ENCODE measurements at regions of chr5 and their contacts with region 1.

Region 1: DNA sequence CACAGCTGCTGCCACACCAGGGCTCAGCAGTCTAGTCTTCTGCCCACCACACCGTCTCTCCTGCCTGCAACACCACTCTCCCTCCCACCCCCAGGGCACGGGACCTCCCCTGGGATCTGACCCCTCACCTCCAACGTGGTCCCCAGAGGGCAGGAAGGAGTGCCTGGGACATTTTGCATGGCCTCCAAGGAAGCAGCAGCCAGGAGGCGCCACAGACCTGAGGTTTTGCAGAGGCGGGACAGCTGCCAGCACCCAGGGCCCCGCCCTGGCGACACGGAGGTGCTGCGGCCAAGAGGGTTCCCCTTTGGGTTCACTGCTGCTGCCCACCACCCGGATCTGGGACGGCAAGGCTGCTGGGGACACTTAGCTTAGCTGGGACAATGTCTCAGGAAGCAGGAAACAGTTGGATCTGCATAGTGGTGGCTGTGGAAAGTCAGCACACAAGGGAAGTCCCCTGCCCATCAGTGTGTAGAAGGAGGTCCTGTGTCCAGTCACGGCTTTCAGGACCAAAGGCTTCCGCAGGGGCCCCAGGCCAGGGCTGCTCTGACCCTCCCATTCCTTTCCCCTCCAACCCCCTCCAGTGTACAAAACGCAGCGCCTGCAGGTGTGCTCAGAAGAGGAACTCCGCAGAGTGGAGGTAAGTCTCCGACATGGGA is 13.8 kb downstream of the PROP1 start:
- DNase-seq: peak in 1 of 2 donors; percentile 16
- ATAC-seq: no peak
- H3K4me3 ChIP-seq: no peak overlapping the region
- H3K27ac ChIP-seq: no peak overlapping the region
- H3K4me1 ChIP-seq: no peaks in the 10 kb centered on the region
- H3K27me3 ChIP-seq: peaks cover 47 to 61% (median 53%) of the 10 kb centered on the region in 3 donors
- CTCF ChIP-seq: peak in 3 of 5 experiments; percentile 34 to 57 (median 40)
- POLR2A ChIP-seq: no peak

Region 2: GRCh38 chr5:177578331-177578730 is 403.9 kb before region 1 on chr5:
- in situ Hi-C with region 1: no loop called
- intact Hi-C with region 1: no loop called
- DNase-seq: no peak
- ATAC-seq: no peak
- H3K4me3 ChIP-seq: no peak overlapping the region
- H3K27ac ChIP-seq: no peak overlapping the region
- H3K4me1 ChIP-seq: no peaks in the 10 kb centered on the region
- H3K27me3 ChIP-seq: no peaks in the 10 kb centered on the region
- CTCF ChIP-seq: no peak
- POLR2A ChIP-seq: no peak

Region 3: GRCh38 chr5:178058321-178059012 is 76.3 kb after region 1 on chr5:
- in situ Hi-C with region 1: loop called in 1 of 4 experiments (anchors 10 kb)
- intact Hi-C with region 1: loop called (anchors 1 kb)
- DNase-seq: no peak
- ATAC-seq: no peak
- H3K4me3 ChIP-seq: no peak overlapping the region
- H3K27ac ChIP-seq: no peak overlapping the region
- H3K4me1 ChIP-seq: no peaks in the 10 kb centered on the region
- H3K27me3 ChIP-seq: no peaks in the 10 kb centered on the region
- CTCF ChIP-seq: no peak
- POLR2A ChIP-seq: no peak

Region 4: GRCh38 chr5:178069909-178070308 is 87.7 kb after region 1 on chr5:
- in situ Hi-C with region 1: loop called in 1 of 4 experiments (anchors 10 kb)
- intact Hi-C with region 1: no loop called
- DNase-seq: no peak
- ATAC-seq: peak in 1 of 2 donors; percentile 45
- H3K4me3 ChIP-seq: no peak overlapping the region
- H3K27ac ChIP-seq: no peak overlapping the region
- H3K4me1 ChIP-seq: no peaks in the 10 kb centered on the region
- H3K27me3 ChIP-seq: peaks cover 0 to 11% (median 2%) of the 10 kb centered on the region in 3 donors
- CTCF ChIP-seq: peak in 1 of 5 experiments; percentile 14
- POLR2A ChIP-seq: no peak

Measured in gastrocnemius medialis (tissue), 4 donors.